ENCODE measurements at regions of chr15 and their contacts with region 1.

Region 1: GRCh38 chr15:55290528-55291057 is 980 bp upstream of the RAB27A start:
- DNase-seq: peak; percentile 92
- H3K4me3 Mint-ChIP-seq: peak overlapping the region; percentile 93
- H3K27ac Mint-ChIP-seq: peak overlapping the region; percentile 97
- H3K4me1 Mint-ChIP-seq: peaks cover 29% of the 10 kb centered on the region
- H3K27me3 Mint-ChIP-seq: no peaks in the 10 kb centered on the region

Region 2: DNA sequence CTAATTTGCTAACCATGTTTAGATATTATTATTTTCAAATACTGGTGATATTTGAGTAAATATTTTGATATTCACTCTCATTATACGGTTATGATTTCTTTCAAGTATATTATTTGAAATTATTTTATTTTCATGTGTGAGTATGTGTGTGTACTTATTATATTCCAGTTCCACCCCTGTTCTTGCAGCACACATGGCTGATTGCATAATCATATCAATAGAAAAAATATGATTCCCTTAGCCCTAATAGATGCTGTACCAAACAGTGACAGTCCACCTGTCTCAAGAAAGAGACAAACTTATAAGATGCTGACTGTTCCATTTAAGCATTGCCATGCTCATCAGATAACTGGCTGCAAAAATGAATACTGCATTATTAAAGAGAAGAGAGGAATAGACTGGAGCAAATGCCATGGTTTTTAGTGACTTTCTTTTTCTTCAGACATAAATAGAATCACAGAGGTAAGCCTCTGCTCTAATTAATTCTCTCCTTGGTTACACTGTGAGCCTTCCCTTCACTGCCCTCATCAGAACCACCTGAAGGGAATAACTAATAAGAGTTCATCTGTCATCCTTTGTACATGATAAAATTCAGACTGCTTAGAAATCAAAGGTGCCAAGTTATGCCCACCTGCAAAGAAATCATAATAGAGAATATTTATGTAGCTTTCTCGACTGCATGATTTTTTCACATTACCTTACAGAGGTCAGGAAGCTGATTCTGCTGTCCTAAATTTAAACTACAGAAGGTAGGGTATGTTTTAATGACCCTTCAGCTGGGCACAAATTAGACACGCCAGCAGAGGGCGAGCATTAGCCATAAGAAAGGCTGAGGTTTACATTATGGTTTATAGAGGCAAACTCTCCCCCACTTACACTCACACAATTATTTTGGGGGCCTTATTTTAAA is 1328.0 kb before region 1 on chr15:
- CTCF ChIA-PET with region 1: no interaction called
- POLR2A ChIA-PET with region 1: no interaction called
- intact Hi-C with region 1: loop called (anchors 5 kb)
- DNase-seq: peak; percentile 37
- H3K4me3 Mint-ChIP-seq: no peak overlapping the region
- H3K27ac Mint-ChIP-seq: no peak overlapping the region
- H3K4me1 Mint-ChIP-seq: no peaks in the 10 kb centered on the region
- H3K27me3 Mint-ChIP-seq: peaks cover 4% of the 10 kb centered on the region

Region 3: GRCh38 chr15:55221090-55222011 is 69.2 kb before region 1 on chr15:
- CTCF ChIA-PET with region 1: interaction called, 72 read pairs
- POLR2A ChIA-PET with region 1: interaction called, 8 read pairs
- intact Hi-C with region 1: loop called (anchors 1 kb)
- DNase-seq: peak; percentile 72
- H3K4me3 Mint-ChIP-seq: peak overlapping the region; percentile 47
- H3K27ac Mint-ChIP-seq: peak overlapping the region; percentile 91
- H3K4me1 Mint-ChIP-seq: peaks cover 76% of the 10 kb centered on the region
- H3K27me3 Mint-ChIP-seq: no peaks in the 10 kb centered on the region

Region 4: DNA sequence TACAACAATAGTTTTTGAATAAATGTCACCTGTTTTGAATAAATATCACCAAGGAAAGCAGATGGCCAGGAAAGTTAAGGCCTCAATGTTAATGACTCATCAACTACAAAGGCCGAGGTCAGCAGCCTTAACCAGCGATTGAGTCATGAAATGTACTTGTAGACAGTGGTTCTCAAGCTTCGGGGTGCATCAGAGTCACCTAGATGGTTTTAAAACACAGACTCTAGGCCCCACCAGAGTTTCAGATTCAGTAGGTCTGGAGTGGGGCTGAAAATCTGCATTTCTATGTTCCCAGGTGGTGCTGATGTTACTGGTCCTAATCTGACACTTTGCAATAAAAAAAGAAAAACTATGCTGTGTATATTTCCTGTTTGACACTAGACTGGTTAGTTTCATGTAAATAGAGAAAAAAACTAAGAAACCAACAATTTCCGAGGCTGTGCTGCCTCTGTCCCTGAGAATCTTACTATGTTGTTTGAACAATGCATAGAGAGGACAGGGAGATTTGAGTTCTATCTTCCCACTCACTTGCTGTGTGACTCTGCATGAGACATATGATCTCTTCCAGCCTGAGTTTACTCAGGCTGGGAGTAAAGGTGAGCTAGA is 10.7 kb before region 1 on chr15:
- CTCF ChIA-PET with region 1: interaction called, 4 read pairs
- POLR2A ChIA-PET with region 1: interaction called, 4 read pairs
- intact Hi-C with region 1: loop called (anchors 1 kb)
- DNase-seq: peak; percentile 78
- H3K4me3 Mint-ChIP-seq: peak overlapping the region; percentile 34
- H3K27ac Mint-ChIP-seq: peak overlapping the region; percentile 98
- H3K4me1 Mint-ChIP-seq: peaks cover 93% of the 10 kb centered on the region
- H3K27me3 Mint-ChIP-seq: no peaks in the 10 kb centered on the region

Region 5: DNA sequence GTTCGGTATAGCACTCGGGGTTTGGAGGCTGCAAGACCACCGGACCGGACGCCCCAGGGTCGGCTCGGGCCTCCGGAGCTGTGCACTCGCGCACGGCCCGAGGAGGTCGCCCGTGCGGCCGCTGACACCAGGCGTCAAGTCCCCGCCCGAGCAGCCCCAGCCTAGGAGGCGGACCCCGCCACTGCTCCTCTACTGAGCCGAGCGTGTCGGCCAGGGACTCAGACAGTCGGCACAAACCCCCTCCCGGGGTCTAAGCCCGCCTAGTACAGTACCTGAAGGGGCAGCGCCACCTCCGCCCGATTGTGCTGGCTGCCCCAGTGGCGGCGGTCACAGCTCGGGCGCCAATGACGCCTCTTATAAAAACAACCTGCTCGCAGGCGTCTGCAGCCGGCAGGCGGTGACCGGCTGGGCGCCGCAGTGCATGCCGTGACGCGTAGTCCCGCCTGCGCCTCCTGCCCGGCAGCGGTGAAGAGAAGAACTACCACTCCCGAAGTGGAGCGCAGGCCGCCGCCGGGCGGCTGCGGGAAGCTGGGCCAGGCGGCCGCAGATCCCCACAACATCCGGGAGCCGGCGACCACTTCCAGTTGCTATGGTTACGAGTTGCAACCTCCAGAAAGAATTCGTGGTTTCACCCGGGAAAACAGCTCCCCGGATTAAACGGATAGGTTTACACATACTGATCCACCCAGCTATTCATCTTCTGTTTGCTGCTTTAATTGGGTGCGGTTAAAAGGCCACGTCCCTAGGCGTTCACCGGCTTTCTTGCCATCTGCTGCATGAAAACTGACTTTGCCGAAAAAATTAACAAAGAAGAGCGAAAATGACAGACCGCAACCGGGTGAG is 117.6 kb after region 1 on chr15 and contains the starts of genes CCPG1 and PIERCE2:
- CTCF ChIA-PET with region 1: no interaction called
- POLR2A ChIA-PET with region 1: no interaction called
- intact Hi-C with region 1: loop called (anchors 1 kb)
- DNase-seq: peak; percentile 93
- H3K4me3 Mint-ChIP-seq: peak within 1 kb of the TSS; percentile 87
- H3K27ac Mint-ChIP-seq: peak within 1 kb of the TSS; percentile 80
- H3K4me1 Mint-ChIP-seq: peaks cover 22% of the 10 kb centered on the region
- H3K27me3 Mint-ChIP-seq: no peaks in the 10 kb centered on the region
- total RNA-seq, gene CCPG1: 14.4 to 16.5 TPM
- total RNA-seq, gene PIERCE2: 0.34 TPM in 1 of 2 experiments, not detected in the other

Measured in activated CD4-positive, alpha-beta memory T cell treated with anti-CD3 and anti-CD28 coated beads for 36 hours (primary cell).